Activated CD4-positive, alpha-beta T cell treated with anti-CD3 and anti-CD28 coated beads, Interleukin-2, amount 10 ng/mL, durations not matched to agents 24 days and 14 days (primary cell): ENCODE measurements at regions of chr11 and their contacts with region 1.

Region 1: DNA sequence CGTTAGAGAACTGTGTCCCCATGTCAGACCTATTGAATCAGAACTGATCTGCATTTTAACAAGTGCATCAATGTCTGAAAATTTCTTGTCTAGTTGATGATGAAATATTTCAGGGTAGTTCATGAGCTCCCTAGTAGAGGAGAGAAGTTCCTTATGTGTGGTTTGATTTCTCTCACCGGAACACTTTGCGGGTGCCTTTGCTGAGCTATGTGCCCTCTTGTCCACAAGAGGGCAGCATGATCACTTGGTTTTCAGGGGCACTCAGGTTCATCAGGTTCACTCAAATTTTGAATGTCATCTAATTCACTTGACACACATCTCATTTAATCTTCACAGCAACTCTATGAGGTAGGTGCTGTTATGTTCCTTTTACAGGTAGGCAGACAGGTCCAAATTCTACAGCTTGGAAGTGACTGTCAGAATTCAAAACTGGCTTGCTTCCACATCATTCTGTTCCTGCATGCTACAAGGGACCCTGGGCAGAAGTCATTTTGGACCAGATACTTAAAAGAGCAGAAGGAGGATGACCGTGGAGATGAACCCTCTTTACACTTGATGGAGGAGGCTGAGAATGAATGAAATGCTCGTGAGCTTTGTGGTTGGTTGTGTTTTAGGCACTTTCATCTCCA is 55.6 kb downstream of the P4HA3 start:
- DNase-seq: peak; percentile 87
- H3K4me3 Mint-ChIP-seq: no peak overlapping the region
- H3K27ac Mint-ChIP-seq: no peak overlapping the region
- H3K4me1 Mint-ChIP-seq: no peaks in the 10 kb centered on the region
- H3K27me3 Mint-ChIP-seq: peaks cover under 1% of the 10 kb centered on the region

Region 2: GRCh38 chr11:74321487-74322188 is 65.8 kb after region 1 on chr11:
- intact Hi-C with region 1: loop called (anchors 5 kb)
- DNase-seq: peak; percentile 71
- H3K4me3 Mint-ChIP-seq: no peak overlapping the region
- H3K27ac Mint-ChIP-seq: no peak overlapping the region
- H3K4me1 Mint-ChIP-seq: peaks cover 2% of the 10 kb centered on the region
- H3K27me3 Mint-ChIP-seq: peaks cover 23% of the 10 kb centered on the region

Region 3: DNA sequence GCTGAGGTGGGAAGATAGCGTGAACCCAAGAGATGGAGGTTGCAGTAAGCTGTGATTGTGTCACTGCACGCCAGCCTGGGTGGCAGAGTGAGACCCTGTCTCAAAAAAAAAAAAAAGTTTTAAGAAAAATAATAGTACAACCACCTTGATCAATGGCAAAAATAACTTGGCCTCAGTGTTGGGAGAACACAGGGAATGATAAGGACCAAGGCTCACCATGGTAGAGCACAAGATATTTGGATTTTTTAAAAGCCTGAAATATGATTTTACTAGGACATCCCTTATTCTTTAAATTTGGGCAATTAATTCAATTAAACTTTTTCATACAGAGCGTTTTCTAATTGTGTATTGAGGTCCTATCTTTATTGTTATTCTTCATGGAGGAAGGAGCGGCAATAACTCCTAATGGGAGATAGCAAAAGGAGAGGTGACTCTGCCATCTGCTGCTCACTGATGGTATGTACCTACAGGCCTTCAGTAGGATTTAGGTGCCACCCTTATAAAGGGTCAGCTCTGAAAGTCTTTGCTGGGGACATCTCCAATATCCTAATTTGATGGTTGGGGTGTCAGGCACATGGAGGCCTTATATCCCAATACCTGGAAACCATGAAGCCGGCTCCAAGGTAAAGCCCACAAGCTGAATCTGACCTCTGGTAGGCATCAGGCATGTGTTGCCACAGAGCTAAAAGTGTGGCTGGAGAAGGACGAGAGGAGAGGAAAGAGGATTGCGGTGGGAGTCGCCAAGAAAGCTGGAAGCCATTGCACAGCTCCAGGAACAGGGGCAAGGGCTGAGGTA is 314.6 kb after region 1 on chr11:
- intact Hi-C with region 1: loop called (anchors 10 kb)
- DNase-seq: peak; percentile 67
- H3K4me3 Mint-ChIP-seq: no peak overlapping the region
- H3K27ac Mint-ChIP-seq: no peak overlapping the region
- H3K4me1 Mint-ChIP-seq: no peaks in the 10 kb centered on the region
- H3K27me3 Mint-ChIP-seq: peaks cover 6% of the 10 kb centered on the region

Region 4: GRCh38 chr11:74766905-74767304 is 511.1 kb after region 1 on chr11:
- intact Hi-C with region 1: no loop called
- DNase-seq: no peak
- H3K4me3 Mint-ChIP-seq: no peak overlapping the region
- H3K27ac Mint-ChIP-seq: no peak overlapping the region
- H3K4me1 Mint-ChIP-seq: peaks cover 22% of the 10 kb centered on the region
- H3K27me3 Mint-ChIP-seq: no peaks in the 10 kb centered on the region